ENCODE measurements at regions of chr20 and their contacts with region 1.

Region 1: GRCh38 chr20:13430346-13431002 is 208.3 kb downstream of the TASP1 start:
- DNase-seq: peak; percentile 57
- H3K4me3 Mint-ChIP-seq: peak overlapping the region; percentile 23
- H3K27ac Mint-ChIP-seq: peak overlapping the region; percentile 80
- H3K4me1 Mint-ChIP-seq: peaks cover 30% of the 10 kb centered on the region
- H3K27me3 Mint-ChIP-seq: no peaks in the 10 kb centered on the region

Region 2: GRCh38 chr20:13119583-13119982 is 310.9 kb before region 1 on chr20:
- intact Hi-C with region 1: loop called (anchors 10 kb)
- DNase-seq: peak; percentile 17
- H3K4me3 Mint-ChIP-seq: no peak overlapping the region
- H3K27ac Mint-ChIP-seq: no peak overlapping the region
- H3K4me1 Mint-ChIP-seq: no peaks in the 10 kb centered on the region
- H3K27me3 Mint-ChIP-seq: peaks cover 5% of the 10 kb centered on the region

Region 3: GRCh38 chr20:13231031-13231752 is 199.3 kb before region 1 on chr20:
- intact Hi-C with region 1: loop called (anchors 1 kb)
- DNase-seq: peak; percentile 68
- H3K4me3 Mint-ChIP-seq: peak overlapping the region; percentile 40
- H3K27ac Mint-ChIP-seq: peak overlapping the region; percentile 94
- H3K4me1 Mint-ChIP-seq: peaks cover 40% of the 10 kb centered on the region
- H3K27me3 Mint-ChIP-seq: peaks cover 2% of the 10 kb centered on the region

Region 4: DNA sequence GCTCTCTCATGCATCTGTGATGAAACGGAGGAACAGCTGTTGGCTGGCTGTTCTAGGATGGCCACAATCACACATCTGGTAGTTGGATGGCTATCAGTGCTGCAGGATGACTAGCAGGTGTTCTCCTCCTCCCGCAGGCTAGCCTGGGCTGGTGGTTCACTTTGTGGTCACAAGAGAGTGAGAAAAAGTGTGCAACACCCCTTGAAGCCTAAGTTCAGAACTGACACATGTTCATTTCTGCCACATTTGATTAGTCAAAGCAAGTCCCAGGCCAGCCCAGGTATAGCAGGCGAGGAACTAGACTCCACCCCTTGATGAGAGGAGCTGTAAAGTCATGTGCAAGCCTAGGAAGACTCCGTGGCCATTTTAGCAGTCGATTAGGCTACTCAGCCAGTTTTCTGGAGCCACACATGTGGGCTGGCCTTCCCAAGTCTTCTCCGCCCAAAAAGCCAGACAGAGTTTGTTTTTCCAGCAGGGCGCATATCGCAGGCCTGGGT is 88.6 kb before region 1 on chr20:
- intact Hi-C with region 1: loop called (anchors 1 kb)
- DNase-seq: no peak
- H3K4me3 Mint-ChIP-seq: no peak overlapping the region
- H3K27ac Mint-ChIP-seq: peak overlapping the region; percentile 36
- H3K4me1 Mint-ChIP-seq: peaks cover 42% of the 10 kb centered on the region
- H3K27me3 Mint-ChIP-seq: no peaks in the 10 kb centered on the region

Region 5: GRCh38 chr20:13449868-13450434 is 19.5 kb after region 1 on chr20:
- intact Hi-C with region 1: no loop called
- DNase-seq: no peak
- H3K4me3 Mint-ChIP-seq: no peak overlapping the region
- H3K27ac Mint-ChIP-seq: no peak overlapping the region
- H3K4me1 Mint-ChIP-seq: no peaks in the 10 kb centered on the region
- H3K27me3 Mint-ChIP-seq: no peaks in the 10 kb centered on the region

Region 6: DNA sequence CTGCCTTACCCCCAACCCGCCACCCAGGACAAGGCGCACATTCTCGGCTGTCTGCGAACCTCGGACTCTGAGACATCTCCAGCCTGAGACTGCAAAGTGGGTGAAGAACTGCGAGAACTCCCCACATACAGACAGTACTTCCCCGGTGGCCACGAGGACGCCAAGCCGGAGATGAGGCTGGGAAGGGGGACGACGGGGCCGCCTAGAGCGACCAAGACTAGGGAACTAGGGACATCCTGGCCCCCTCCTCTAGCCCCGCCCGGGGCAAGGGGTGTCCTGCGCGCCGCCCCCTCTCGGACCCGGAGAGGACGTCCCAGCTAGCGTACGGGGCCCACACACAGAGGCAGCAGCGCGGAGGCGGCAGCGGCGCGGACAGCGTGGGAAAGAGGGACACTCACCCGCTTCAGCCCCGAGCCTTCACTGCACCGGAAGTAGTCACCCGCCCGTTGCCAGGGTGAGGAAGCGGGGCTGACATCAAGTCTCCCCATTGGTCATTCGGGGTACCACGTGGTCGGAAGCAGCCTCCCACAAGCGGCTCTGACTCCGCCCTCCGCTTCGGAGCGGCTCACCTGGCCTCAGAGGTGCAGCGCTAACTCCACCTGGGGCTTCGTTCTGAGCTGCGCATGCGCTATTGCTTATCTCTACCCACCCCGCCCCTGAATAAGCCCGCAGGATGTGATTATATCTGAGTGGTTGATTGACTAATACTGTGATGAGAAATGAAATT is 208.2 kb after region 1 on chr20 and contains the start of gene TASP1:
- intact Hi-C with region 1: loop called (anchors 5 kb)
- DNase-seq: peak; percentile 90
- H3K4me3 Mint-ChIP-seq: peak within 1 kb of the TSS; percentile 95
- H3K27ac Mint-ChIP-seq: peak within 1 kb of the TSS; percentile 72
- H3K4me1 Mint-ChIP-seq: peaks cover 21% of the 10 kb centered on the region
- H3K27me3 Mint-ChIP-seq: peaks cover 3% of the 10 kb centered on the region
- total RNA-seq, gene TASP1: 9.6 and 11.3 TPM in 2 replicates